ENCODE measurements at regions of chr13 and their contacts with region 1.

Region 1: GRCh38 chr13:50123862-50124536 is 108.8 kb downstream of the KCNRG start:
- DNase-seq: peak in 4 of 5 donors; percentile 67 to 93 (median 74)
- H3K4me3 ChIP-seq: peak overlapping the region; percentile 48 to 92
- H3K4me3 Mint-ChIP-seq: peak overlapping the region; percentile 84 to 97 (median 91)
- H3K27ac ChIP-seq: peak overlapping the region; percentile 98
- H3K27ac Mint-ChIP-seq: peak overlapping the region; percentile 94 to 99 (median 97)
- H3K4me1 ChIP-seq: peaks cover 64% of the 10 kb centered on the region
- H3K4me1 Mint-ChIP-seq: peaks cover 36 to 70% (median 55%) of the 10 kb centered on the region in 4 donors
- H3K27me3 ChIP-seq: no peaks in the 10 kb centered on the region
- H3K27me3 Mint-ChIP-seq: peaks cover 3 to 10% of the 10 kb centered on the region in 2 donors

Region 2: GRCh38 chr13:49443704-49444523 is 680.1 kb before region 1 on chr13 and contains the starts of genes CAB39L and SETDB2:
- CTCF ChIA-PET with region 1: no interaction called
- POLR2A ChIA-PET with region 1: interaction called, 5 read pairs
- intact Hi-C with region 1: loop called (anchors 5 kb)
- DNase-seq: peak; percentile 99 to 100 (median 100)
- H3K4me3 ChIP-seq: peak within 1 kb of the TSS; percentile 72 to 88
- H3K4me3 Mint-ChIP-seq: peak within 1 kb of the TSS; percentile 92 to 98 (median 96)
- H3K27ac ChIP-seq: peak within 1 kb of the TSS; percentile 79
- H3K27ac Mint-ChIP-seq: peak within 1 kb of the TSS; percentile 93 to 99 (median 99)
- H3K4me1 ChIP-seq: peaks cover 50% of the 10 kb centered on the region
- H3K4me1 Mint-ChIP-seq: peaks cover 28 to 58% (median 41%) of the 10 kb centered on the region in 4 donors
- H3K27me3 ChIP-seq: no peaks in the 10 kb centered on the region
- H3K27me3 Mint-ChIP-seq: no peaks in the 10 kb centered on the region
- total RNA-seq, gene CAB39L: 5.7 to 7.7 TPM
- total RNA-seq, gene SETDB2: 27.6 to 28.2 TPM

Region 3: GRCh38 chr13:49954674-49955491 is 169.1 kb before region 1 on chr13:
- CTCF ChIA-PET with region 1: no interaction called
- POLR2A ChIA-PET with region 1: no interaction called
- intact Hi-C with region 1: no loop called
- DNase-seq: no peak
- H3K4me3 ChIP-seq: no peak overlapping the region
- H3K4me3 Mint-ChIP-seq: no peak overlapping the region
- H3K27ac ChIP-seq: no peak overlapping the region
- H3K27ac Mint-ChIP-seq: no peak overlapping the region
- H3K4me1 ChIP-seq: no peaks in the 10 kb centered on the region
- H3K4me1 Mint-ChIP-seq: no peaks in the 10 kb centered on the region
- H3K27me3 ChIP-seq: no peaks in the 10 kb centered on the region
- H3K27me3 Mint-ChIP-seq: peaks cover 3 to 4% of the 10 kb centered on the region in 2 donors

Region 4: DNA sequence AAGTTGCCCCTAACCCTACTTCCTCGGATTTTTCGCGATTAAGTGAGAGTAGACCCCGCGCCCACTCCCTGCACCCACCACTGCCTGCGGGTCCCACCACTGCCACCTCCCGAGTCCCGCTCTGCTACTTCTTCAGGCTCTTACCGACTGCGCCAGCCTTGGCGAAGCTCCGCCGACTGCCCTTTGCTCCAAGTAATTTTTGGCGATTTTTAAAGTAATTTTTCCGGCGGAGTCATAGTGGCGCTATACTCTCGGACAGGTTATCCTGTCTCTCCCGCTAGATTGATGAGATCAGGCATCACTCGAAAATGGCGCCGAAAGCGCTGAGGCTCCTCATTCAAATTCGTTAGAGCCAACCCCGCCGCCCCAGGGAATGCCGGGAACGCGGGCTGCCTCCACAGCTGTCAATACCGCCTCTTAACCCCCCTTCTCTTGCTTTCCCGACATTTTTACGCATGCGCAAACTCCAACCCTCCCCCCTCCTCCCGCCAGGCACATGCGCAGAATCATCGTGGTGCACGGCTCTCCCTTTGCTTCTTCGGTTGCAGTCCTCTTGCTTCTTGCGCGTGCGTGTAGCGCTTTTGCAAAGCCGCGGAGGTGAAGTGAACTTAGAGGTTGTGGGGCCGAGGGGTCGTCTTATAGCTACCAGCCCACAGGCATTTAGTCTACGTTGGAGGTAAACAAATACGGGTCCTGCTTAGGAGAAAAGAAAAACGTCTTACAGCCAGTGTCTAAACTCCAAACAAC is 42.1 kb before region 1 on chr13:
- CTCF ChIA-PET with region 1: interaction called, 252 read pairs
- POLR2A ChIA-PET with region 1: interaction called, 648 read pairs
- intact Hi-C with region 1: loop called (anchors 1 kb)
- DNase-seq: peak; percentile 98 to 99 (median 99)
- H3K4me3 ChIP-seq: peak overlapping the region; percentile 85 to 87
- H3K4me3 Mint-ChIP-seq: peak overlapping the region; percentile 96 to 100 (median 99)
- H3K27ac ChIP-seq: peak overlapping the region; percentile 89
- H3K27ac Mint-ChIP-seq: peak overlapping the region; percentile 93 to 100 (median 98)
- H3K4me1 ChIP-seq: peaks cover 54% of the 10 kb centered on the region
- H3K4me1 Mint-ChIP-seq: peaks cover 23 to 62% (median 37%) of the 10 kb centered on the region in 4 donors
- H3K27me3 ChIP-seq: no peaks in the 10 kb centered on the region
- H3K27me3 Mint-ChIP-seq: peaks cover 0 to 6% of the 10 kb centered on the region in 2 donors

Region 5: DNA sequence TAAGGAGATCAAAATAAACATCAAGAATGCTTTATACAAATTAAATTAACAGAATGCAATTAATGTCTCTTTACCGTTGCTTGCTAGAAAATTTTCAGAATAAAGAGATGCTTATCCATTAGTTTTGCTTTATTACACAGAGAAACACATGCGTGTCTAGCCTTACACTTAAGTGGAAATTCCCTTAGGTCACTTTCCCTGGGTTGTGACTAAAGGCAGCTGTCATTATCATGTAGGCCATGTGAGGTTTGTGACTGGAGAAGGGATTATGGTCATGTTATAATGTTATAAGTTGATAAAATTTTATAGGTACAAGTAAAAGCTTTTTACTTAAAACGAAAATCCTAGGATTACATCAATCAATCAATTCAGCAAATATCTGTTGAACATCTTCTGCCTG is 12.2 kb after region 1 on chr13:
- CTCF ChIA-PET with region 1: interaction called, 3 read pairs
- POLR2A ChIA-PET with region 1: interaction called, 29 read pairs
- intact Hi-C with region 1: no loop called
- DNase-seq: no peak
- H3K4me3 ChIP-seq: no peak overlapping the region
- H3K4me3 Mint-ChIP-seq: no peak overlapping the region
- H3K27ac ChIP-seq: no peak overlapping the region
- H3K27ac Mint-ChIP-seq: peak overlapping the region in 1 of 7 donors; percentile 8
- H3K4me1 ChIP-seq: peaks cover 19% of the 10 kb centered on the region
- H3K4me1 Mint-ChIP-seq: peaks cover 7 to 17% (median 13%) of the 10 kb centered on the region in 4 donors
- H3K27me3 ChIP-seq: peaks cover 23% of the 10 kb centered on the region
- H3K27me3 Mint-ChIP-seq: peaks cover 14 to 23% of the 10 kb centered on the region in 2 donors

Region 6: DNA sequence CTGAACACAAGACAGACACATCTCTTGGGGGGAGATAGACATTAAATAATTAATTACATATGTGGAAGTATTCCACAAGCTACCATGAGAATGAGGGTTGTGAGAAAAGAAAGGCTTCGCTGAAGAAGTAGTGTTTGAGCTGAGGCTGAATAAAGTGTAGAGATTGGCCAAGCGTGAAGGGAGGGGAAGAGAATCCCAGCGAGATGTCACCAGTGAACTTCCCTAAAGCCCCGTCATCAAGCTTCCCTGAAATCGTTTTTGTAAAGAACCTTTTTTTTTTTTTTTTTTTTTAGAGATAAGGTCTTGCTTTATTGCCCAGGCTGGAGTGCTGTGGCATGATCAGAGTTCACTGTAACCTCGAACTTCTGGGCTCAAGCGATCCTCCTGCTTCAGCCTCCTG is 126.4 kb after region 1 on chr13:
- CTCF ChIA-PET with region 1: interaction called, 4 read pairs
- POLR2A ChIA-PET with region 1: interaction called, 13 read pairs
- intact Hi-C with region 1: loop called (anchors 5 kb)
- DNase-seq: no peak
- H3K4me3 ChIP-seq: no peak overlapping the region
- H3K4me3 Mint-ChIP-seq: no peak overlapping the region
- H3K27ac ChIP-seq: no peak overlapping the region
- H3K27ac Mint-ChIP-seq: no peak overlapping the region
- H3K4me1 ChIP-seq: peaks cover 37% of the 10 kb centered on the region
- H3K4me1 Mint-ChIP-seq: peaks cover 27 to 50% (median 44%) of the 10 kb centered on the region in 4 donors
- H3K27me3 ChIP-seq: no peaks in the 10 kb centered on the region
- H3K27me3 Mint-ChIP-seq: no peaks in the 10 kb centered on the region

Region 7: GRCh38 chr13:50512474-50513299 is 388.7 kb after region 1 on chr13:
- CTCF ChIA-PET with region 1: no interaction called
- POLR2A ChIA-PET with region 1: interaction called, 20 read pairs
- intact Hi-C with region 1: no loop called
- DNase-seq: peak; percentile 36 to 49 (median 47)
- H3K4me3 ChIP-seq: peak overlapping the region; percentile 14 to 37
- H3K4me3 Mint-ChIP-seq: no peak overlapping the region
- H3K27ac ChIP-seq: peak overlapping the region; percentile 12
- H3K27ac Mint-ChIP-seq: no peak overlapping the region
- H3K4me1 ChIP-seq: peaks cover 20% of the 10 kb centered on the region
- H3K4me1 Mint-ChIP-seq: no peaks in the 10 kb centered on the region
- H3K27me3 ChIP-seq: no peaks in the 10 kb centered on the region
- H3K27me3 Mint-ChIP-seq: no peaks in the 10 kb centered on the region

Measured in CD4-positive, alpha-beta memory T cell (primary cell).